AG04450 (cell line): ENCODE measurements at regions of chr14 and their contacts with region 1.

Region 1: GRCh38 chr14:91177073-91178034 is 63.5 kb downstream of the DGLUCY start:
- DNase-seq: no peak
- H3K4me3 ChIP-seq: no peak overlapping the region
- H3K27ac ChIP-seq: no peak overlapping the region
- H3K27me3 ChIP-seq: no peaks in the 10 kb centered on the region
- CTCF ChIP-seq: peak; percentile 83

Region 2: GRCh38 chr14:90894241-90894640 is 283.1 kb before region 1 on chr14:
- CTCF ChIA-PET with region 1: interaction called, 320 read pairs
- POLR2A ChIA-PET with region 1: no interaction called
- DNase-seq: no peak
- H3K4me3 ChIP-seq: no peak overlapping the region
- H3K27ac ChIP-seq: no peak overlapping the region
- H3K27me3 ChIP-seq: no peaks in the 10 kb centered on the region
- CTCF ChIP-seq: no peak

Region 3: DNA sequence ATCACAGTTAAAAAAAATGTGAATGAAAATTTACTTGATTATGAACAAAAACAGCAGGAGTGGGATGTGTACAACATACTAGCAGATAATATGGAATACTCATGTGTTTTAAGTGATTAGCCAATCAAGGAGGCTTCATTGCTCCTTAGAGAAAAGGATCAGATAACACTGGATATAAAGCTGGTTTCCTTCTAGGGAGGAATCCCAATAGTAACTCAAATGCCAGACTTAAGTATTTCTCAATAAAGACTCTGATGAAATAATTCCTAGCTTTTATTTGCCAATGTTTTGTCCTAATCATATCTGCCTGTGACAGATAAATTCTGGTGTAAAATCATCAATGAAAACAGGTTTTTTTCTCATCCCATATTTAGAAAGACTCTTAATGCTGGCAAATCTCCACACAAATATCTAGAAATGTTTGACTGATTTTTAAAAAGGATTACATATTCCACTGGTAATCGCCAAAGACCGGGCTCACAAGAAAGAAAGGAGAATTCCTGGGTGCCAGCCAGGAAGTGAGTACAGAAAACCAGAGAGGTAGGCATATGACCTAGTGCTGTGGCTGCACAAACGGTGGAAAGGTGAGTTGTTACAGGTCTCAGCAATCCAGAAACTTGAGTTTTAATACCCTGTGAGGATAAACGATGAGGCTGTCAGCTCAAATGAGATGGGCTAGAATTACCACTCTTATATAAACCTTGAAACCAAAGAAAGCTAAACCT is 252.6 kb before region 1 on chr14:
- CTCF ChIA-PET with region 1: interaction called, 13 read pairs
- POLR2A ChIA-PET with region 1: no interaction called
- DNase-seq: no peak
- H3K4me3 ChIP-seq: no peak overlapping the region
- H3K27ac ChIP-seq: no peak overlapping the region
- H3K27me3 ChIP-seq: no peaks in the 10 kb centered on the region
- CTCF ChIP-seq: no peak

Region 4: GRCh38 chr14:91114079-91115065 is 63.0 kb before region 1 on chr14:
- CTCF ChIA-PET with region 1: interaction called, 10 read pairs
- POLR2A ChIA-PET with region 1: interaction called, 3 read pairs
- DNase-seq: no peak
- H3K4me3 ChIP-seq: peak overlapping the region; percentile 73
- H3K27ac ChIP-seq: peak overlapping the region; percentile 61
- H3K27me3 ChIP-seq: no peaks in the 10 kb centered on the region
- CTCF ChIP-seq: no peak

Region 5: GRCh38 chr14:91163316-91163715 is 14.0 kb before region 1 on chr14:
- CTCF ChIA-PET with region 1: interaction called, 40 read pairs
- POLR2A ChIA-PET with region 1: interaction called, 3 read pairs
- DNase-seq: no peak
- H3K4me3 ChIP-seq: no peak overlapping the region
- H3K27ac ChIP-seq: no peak overlapping the region
- H3K27me3 ChIP-seq: no peaks in the 10 kb centered on the region
- CTCF ChIP-seq: no peak

Region 6: GRCh38 chr14:91292491-91292890 is 115.1 kb after region 1 on chr14:
- CTCF ChIA-PET with region 1: interaction called, 350 read pairs
- POLR2A ChIA-PET with region 1: no interaction called
- DNase-seq: no peak
- H3K4me3 ChIP-seq: no peak overlapping the region
- H3K27ac ChIP-seq: no peak overlapping the region
- H3K27me3 ChIP-seq: no peaks in the 10 kb centered on the region
- CTCF ChIP-seq: no peak